ENCODE measurements at regions of chr7 and their contacts with region 1.

Region 1: DNA sequence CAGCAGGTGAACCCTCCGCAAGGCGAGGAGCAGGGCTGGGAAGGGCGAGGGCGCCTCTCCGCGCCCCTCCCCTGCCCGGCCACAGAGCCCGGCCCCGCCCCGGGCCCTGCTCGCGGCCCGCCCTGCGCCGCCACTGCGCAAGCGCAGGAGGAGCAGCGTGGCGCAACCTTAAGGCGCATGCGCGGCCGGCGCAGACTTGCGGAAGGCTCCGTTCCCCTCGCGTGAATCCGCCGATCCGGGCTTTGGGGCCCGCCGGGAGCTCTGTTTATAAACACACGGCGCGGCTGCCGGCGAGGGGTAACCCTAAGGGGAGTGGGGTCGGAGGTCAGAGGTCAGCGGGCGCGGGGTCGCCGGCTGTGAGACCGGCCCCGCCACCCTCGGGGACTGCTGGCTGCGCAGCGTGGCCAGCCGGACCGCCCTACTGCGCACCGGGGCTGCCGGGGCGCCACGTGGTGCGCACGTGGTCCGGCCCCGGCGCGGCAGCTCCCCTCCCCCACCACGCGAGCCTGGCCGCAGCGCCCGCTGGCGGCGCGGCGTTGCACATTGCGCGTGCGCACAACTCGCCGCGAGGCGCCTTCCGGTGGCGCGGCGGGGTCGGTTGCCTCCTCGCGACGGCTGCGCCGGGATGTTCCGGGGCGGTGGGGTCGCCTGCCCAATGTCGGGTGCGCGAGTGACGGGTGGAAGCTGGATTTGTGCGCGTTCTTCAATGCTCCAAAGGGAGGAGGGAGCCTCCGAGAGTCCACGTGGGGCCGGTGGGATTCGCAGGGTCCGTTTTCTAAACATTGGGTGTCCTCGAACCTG is 40.2 kb upstream of the FOXK1 start:
- DNase-seq: peak; percentile 100
- ATAC-seq: peak; percentile 85
- H3K4me3 Mint-ChIP-seq: peak overlapping the region; percentile 87
- H3K27ac Mint-ChIP-seq: peak overlapping the region; percentile 93
- H3K4me1 Mint-ChIP-seq: peaks cover 9% of the 10 kb centered on the region
- H3K27me3 Mint-ChIP-seq: no peaks in the 10 kb centered on the region
- CTCF ChIP-seq: no peak

Region 2: DNA sequence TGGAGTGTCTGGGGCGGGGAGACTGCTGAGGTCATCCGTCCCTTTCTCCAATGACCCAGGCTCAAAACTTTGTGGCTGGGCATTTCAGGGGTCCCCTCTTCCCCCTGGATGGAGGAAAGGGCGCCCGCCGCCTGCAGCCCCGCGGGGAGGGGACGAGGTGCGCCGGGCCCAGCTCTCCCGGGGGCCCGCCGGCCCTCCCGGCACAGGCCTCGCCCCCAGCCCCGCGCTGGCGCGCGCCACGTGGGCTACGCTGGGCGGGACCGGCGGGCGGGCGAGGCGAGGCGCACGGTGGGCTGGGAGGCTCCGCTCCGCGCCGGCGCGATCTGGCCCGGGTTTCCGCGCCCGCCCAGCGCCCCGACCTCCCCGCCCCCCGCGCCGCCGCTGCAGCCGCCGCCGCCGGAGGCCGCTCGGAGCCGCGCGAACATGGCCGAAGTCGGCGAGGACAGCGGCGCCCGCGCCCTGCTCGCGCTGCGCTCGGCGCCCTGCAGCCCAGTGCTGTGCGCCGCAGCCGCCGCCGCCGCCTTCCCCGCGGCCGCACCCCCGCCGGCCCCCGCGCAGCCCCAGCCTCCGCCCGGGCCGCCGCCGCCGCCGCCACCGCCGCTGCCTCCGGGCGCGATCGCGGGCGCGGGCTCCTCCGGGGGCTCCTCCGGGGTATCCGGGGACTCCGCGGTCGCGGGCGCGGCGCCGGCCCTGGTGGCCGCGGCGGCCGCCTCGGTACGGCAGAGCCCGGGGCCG is 40.2 kb after region 1 on chr7 and contains the start of gene FOXK1:
- CTCF ChIA-PET with region 1: interaction called, 21 read pairs
- POLR2A ChIA-PET with region 1: interaction called, 151 read pairs
- intact Hi-C with region 1: loop called (anchors 1 kb)
- DNase-seq: peak; percentile 85
- ATAC-seq: peak; percentile 83
- H3K4me3 Mint-ChIP-seq: peak within 1 kb of the TSS; percentile 92
- H3K27ac Mint-ChIP-seq: peak within 1 kb of the TSS; percentile 95
- H3K4me1 Mint-ChIP-seq: peaks cover 30% of the 10 kb centered on the region
- H3K27me3 Mint-ChIP-seq: peaks cover 3% of the 10 kb centered on the region
- CTCF ChIP-seq: no peak
- total RNA-seq, gene FOXK1: 37.5 and 42.7 TPM in 2 replicates

Region 3: DNA sequence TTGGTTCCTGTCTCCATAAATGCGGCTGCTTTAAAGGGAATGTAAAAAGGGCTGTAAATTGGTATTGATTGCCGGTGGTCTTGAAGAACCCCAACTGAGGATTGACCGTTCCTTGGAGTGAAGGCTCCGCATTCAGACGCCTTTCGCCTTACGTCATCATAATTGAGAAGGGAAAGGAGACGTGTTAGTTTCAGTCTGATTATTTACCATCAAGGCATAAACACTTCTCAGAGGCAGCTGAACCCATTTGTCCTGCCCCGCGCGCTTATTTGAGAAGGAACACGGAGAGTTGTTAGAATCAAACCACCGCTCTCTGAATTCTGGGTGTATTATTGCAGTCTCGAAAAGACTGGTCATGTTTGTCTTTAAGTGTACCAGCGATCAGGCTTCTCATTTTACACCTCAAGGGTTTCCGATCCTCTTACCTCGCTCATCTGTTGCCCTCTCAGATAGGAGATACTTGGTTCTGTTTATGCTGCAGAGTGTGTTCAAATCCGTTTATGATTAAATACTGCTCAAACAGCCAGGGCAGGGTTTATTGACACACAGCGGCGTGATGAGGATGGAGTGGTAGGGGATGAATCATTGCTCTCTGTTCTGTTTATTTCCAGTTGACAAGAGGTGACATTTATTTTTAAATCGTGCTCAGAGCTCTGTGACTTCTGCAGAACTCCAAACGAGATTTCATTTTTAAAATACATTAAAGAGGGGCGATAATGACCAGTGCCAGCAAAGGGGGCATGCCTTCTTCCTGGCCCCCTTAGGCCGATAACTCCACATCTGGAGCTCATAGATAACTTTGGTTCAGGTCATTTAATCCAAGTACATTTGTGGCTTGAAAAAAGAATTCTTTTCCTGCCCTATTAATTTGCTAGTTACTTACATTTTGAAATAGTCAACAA is 70.7 kb after region 1 on chr7:
- CTCF ChIA-PET with region 1: no interaction called
- POLR2A ChIA-PET with region 1: interaction called, 12 read pairs
- intact Hi-C with region 1: no loop called
- DNase-seq: no peak
- ATAC-seq: peak; percentile 78
- H3K4me3 Mint-ChIP-seq: peak overlapping the region; percentile 75
- H3K27ac Mint-ChIP-seq: peak overlapping the region; percentile 73
- H3K4me1 Mint-ChIP-seq: peaks cover 50% of the 10 kb centered on the region
- H3K27me3 Mint-ChIP-seq: no peaks in the 10 kb centered on the region
- CTCF ChIP-seq: no peak

Region 4: DNA sequence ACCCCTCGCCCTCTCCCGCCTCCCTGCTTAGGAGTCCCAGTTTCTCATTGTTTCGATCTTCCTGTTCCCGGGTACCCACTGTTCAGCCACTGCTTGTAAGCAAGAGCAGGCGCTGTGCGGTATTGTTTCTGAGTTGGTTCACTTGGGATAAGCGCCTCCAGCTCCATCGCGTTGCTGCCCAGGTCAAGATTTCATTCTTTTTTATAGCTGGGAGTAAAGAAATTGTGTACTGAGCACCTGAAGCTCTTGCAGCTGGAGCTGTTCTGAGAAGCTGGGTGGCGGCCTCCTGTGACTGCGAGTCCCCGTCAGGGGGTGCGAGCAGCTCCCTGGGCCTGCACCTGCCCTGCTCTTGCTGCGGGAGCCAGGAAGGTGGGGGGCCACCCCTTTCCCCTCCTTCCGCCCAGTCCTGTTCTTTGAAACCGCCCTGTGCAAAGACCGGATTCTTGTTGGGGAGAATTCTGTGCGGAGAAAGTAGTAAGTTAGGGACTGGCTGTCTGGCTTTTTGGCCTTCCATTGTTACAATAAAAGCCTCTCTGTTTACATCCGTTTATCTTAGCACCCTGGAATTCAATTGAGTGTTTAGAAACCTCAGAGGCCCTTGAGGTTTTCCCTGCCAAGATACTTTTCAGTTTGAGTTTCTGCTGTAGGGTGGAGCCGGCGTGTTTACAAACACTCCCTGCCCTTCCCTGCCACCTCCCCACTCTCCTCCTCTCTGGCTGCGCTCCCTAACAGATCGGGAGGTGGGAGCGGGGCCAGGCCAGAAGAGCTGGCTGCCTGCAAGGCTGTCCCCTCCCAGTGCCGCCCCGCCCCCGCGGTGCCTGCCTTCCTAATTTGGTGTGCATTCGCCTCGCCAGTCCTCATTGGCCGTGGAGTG is 102.8 kb after region 1 on chr7:
- CTCF ChIA-PET with region 1: no interaction called
- POLR2A ChIA-PET with region 1: interaction called, 35 read pairs
- intact Hi-C with region 1: loop called (anchors 2 kb)
- DNase-seq: peak; percentile 67
- ATAC-seq: peak; percentile 82
- H3K4me3 Mint-ChIP-seq: peak overlapping the region; percentile 81
- H3K27ac Mint-ChIP-seq: peak overlapping the region; percentile 92
- H3K4me1 Mint-ChIP-seq: peaks cover 58% of the 10 kb centered on the region
- H3K27me3 Mint-ChIP-seq: no peaks in the 10 kb centered on the region
- CTCF ChIP-seq: no peak

Region 5: DNA sequence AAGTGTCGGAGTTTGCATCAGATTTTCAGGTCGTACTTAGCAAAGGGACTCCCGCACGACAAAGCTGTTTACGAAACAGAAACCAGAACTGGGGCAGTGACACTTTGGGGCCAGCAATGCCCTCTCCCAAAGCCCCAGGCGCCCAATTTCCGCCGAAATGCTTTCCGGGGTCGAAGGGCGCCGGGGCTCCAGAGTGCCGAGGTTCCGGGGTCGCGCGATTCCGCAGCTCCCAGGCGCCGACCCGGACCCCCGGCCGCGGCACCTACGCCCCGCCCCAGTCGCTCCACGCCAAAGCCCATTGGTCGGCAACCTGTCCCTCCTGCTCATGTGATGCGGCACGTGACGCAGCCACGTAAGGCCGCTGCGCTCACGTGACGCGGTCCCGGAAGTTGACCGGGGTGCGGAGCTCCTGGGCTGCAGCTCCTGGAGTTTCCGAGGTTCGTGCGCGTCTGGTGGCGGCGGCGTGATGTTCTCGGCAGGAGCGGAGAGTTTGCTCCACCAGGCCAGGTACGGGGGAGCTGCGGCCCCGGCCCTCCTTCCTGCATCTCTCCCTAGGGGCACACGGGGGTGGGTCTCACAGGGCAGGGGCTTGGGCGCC is 133.5 kb after region 1 on chr7 and contains the start of gene AP5Z1:
- CTCF ChIA-PET with region 1: interaction called, 7 read pairs
- POLR2A ChIA-PET with region 1: interaction called, 74 read pairs
- intact Hi-C with region 1: loop called (anchors 1 kb)
- DNase-seq: peak; percentile 91
- ATAC-seq: peak; percentile 94
- H3K4me3 Mint-ChIP-seq: peak within 1 kb of the TSS; percentile 99
- H3K27ac Mint-ChIP-seq: peak within 1 kb of the TSS; percentile 98
- H3K4me1 Mint-ChIP-seq: peaks cover 41% of the 10 kb centered on the region
- H3K27me3 Mint-ChIP-seq: no peaks in the 10 kb centered on the region
- CTCF ChIP-seq: no peak
- total RNA-seq, gene AP5Z1: 98.3 and 111 TPM in 2 replicates